Mammary epithelial cell (primary cell): ENCODE measurements at regions of chr11 and their contacts with region 1.

Region 1: GRCh38 chr11:71103266-71103665 is 149.1 kb downstream of the SHANK2 start:
- DNase-seq: no peak
- H3K4me3 ChIP-seq: no peak overlapping the region
- H3K27ac ChIP-seq: no peak overlapping the region
- H3K4me1 ChIP-seq: no peaks in the 10 kb centered on the region
- H3K27me3 ChIP-seq: no peaks in the 10 kb centered on the region
- CTCF ChIP-seq: no peak

Region 2: DNA sequence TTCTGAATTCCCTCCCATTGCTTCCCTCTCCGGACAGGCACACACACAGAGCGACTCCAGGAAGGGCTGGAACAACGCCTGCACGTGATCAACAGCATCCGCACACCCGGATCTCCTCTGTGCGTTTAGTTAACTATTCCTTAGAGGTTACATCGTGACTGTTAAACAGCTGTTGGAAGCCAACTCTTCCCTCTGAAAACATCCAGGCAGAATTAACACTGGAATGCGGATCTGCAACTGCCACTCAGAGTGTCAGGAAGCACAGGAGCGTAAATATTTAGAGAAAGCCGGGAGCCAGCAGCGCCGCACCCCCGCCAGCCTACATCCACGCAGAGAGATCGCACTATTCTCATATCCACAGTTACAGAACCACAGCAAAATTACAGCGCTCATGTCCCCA is 102.9 kb after region 1 on chr11:
- CTCF ChIA-PET with region 1: no interaction called
- dilution Hi-C with region 1: no loop called
- in situ Hi-C with region 1: no loop called
- intact Hi-C with region 1: no loop called
- DNase-seq: no peak
- H3K4me3 ChIP-seq: no peak overlapping the region
- H3K27ac ChIP-seq: no peak overlapping the region
- H3K4me1 ChIP-seq: no peaks in the 10 kb centered on the region
- H3K27me3 ChIP-seq: no peaks in the 10 kb centered on the region
- CTCF ChIP-seq: no peak

Region 3: DNA sequence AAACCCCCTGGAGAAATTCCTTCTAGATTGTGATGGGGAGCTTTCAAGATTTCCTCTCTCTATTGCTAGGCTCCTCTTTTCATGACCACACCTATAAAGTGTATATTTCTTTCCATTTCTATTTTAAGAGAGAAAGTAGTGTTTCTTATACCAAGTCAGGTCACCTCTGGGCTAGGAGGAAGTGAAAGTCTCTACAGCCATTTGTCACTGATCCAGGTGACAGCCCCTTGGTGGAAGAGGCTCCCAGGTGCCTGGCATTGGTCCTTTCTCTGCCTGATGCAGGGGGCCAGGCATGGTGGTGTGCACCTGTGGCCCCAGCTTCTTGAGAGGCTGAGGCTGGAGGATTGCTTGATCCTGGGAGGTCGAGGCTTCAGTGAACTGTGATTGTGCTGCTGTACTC is 280.2 kb after region 1 on chr11:
- CTCF ChIA-PET with region 1: no interaction called
- dilution Hi-C with region 1: loop called (anchors 5 kb)
- in situ Hi-C with region 1: no loop called
- intact Hi-C with region 1: no loop called
- DNase-seq: no peak
- H3K4me3 ChIP-seq: no peak overlapping the region
- H3K27ac ChIP-seq: no peak overlapping the region
- H3K4me1 ChIP-seq: no peaks in the 10 kb centered on the region
- H3K27me3 ChIP-seq: peaks cover 1% of the 10 kb centered on the region
- CTCF ChIP-seq: no peak